Endothelial cell of umbilical vein (primary cell): ENCODE measurements at regions of chr11 and their contacts with region 1.

Region 1: DNA sequence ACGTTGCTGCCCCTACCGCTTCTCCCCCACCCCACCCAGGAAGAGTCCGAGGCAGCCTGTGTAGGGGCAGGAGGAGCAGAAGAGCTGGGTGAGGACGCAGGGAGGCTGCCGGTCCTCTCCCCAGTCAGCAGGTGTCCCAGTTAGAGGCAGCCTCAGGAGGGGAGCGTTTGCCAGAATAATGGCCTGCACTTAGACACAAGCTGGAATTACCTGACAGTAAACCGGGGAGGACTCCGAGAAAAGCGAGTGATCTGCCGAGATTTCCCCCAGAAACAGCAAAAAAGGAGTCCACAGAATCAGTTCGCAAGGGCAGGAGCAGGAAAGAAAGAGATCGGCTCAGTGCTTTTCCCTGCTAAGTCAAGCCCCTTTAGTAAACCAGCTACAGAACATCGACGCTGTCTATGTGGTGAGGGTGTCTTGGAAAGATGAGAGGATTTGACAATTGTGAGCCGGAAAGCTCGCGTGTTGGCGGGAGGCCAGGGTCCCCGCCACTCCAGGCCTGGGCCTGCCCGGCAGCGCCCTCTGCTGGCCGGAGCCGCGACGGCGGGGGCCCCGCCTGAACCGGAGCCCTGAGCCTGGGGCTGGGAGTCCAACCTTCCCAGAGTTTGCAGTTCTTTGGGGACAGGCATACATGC is 17.7 kb upstream of the THRSP start:
- DNase-seq: peak; percentile 62
- H3K4me3 ChIP-seq: peak overlapping the region in 2 of 3 experiments; percentile 23 to 72
- H3K27ac ChIP-seq: no peak overlapping the region
- H3K4me1 ChIP-seq: peaks cover 8% of the 10 kb centered on the region
- H3K27me3 ChIP-seq: no peaks in the 10 kb centered on the region
- CTCF ChIP-seq: peak; percentile 97 to 99
- POLR2A ChIP-seq: no peak

Region 2: DNA sequence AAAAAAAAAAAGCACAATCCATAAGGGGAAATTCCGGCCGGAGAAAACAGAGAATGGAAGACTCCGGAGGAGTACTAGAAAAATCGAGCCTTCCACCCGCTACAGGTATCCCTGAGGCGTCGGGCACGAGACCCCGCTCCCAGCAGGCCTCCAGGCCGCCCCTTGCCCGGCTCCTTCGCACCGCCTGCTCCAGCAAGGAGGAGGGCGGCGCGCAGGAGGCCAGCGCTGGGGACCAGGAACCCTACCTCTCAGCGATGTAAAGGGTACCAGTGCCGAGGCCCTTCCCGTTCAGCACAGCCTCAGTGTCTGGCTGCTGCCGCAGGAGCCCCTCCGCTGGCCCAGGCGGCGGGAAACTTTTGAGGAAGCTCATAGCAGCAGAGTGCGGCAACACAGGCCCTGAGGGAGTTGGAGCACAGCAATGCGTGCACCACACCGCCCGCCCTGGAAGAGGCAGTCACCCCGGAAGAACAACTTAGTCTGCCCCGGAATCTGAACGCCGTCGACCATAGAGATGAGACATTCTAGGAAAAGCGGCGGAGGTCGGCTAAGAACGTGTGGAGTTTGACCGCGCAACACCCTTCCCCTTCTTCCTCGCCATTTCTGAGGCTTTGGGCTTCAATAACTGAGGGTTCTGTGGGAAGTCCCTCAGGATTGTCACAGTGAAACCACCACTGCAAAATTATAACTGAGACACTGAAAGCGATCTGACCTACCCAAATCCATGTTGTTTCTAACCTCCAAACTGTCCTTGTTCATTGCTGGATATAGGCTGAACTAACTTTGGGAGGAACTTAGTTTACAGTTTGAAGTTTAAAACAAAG is 408.4 kb before region 1 on chr11 and contains the start of gene CLNS1A:
- CTCF ChIA-PET with region 1: no interaction called
- POLR2A ChIA-PET with region 1: no interaction called
- dilution Hi-C with region 1: no loop called
- intact Hi-C with region 1: loop called (anchors 2 kb)
- DNase-seq: peak; percentile 90
- H3K4me3 ChIP-seq: peak within 1 kb of the TSS; percentile 61 to 88 (median 86)
- H3K27ac ChIP-seq: peak within 1 kb of the TSS; percentile 49
- H3K4me1 ChIP-seq: peaks cover 7% of the 10 kb centered on the region
- H3K27me3 ChIP-seq: no peaks in the 10 kb centered on the region
- CTCF ChIP-seq: no peak
- POLR2A ChIP-seq: peak; percentile 90
- total RNA-seq, gene CLNS1A: 89.9 and 99.7 TPM in 2 replicates

Region 3: DNA sequence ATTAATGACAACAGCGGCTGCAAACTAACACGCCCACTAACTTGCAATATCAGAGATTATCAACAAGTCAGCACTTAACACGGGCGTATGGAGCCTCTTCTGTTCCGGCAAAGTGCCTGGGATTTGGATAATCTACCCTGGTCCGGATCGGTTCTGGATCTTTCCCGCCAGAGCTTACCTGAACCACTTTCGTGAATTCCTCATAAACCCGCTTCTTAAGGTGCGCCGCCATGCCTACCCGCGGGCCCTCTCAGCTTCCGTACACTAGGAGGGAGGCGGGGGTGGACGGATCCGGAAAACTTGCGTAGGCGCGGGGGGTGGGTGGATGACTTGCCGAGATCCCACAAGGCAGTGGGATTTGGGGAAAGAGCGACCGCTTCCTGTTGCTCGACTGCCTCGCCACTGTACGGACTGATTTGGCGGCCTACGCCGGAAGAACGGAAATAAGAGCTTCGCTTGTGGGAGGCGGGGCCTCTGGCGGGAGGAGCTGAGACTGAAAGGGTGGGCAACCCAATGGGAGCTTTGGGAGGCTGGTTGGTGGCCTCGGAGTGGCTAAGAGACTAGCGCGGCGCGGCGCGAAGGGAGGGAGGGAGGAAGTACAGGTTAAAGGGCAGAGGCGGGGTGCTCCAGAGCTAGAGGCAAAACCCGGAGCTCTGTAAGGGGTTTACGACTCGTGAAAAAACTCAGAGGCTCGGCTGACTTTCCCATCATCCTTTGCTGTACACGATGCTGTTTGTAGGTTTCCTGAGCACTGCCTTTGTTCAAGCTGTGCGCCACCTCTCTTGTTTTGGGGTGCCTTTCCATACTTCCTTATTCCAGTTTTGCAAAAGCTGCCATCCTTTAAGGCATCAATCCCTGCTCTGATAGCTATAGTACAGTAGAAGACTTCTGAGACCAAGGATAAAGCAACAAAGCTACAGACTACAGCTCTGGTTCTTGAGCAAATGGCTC is 51.3 kb before region 1 on chr11 and contains the start of gene INTS4:
- CTCF ChIA-PET with region 1: interaction called, 28 read pairs
- POLR2A ChIA-PET with region 1: interaction called, 4 read pairs
- dilution Hi-C with region 1: no loop called
- intact Hi-C with region 1: no loop called
- DNase-seq: peak; percentile 100
- H3K4me3 ChIP-seq: peak within 1 kb of the TSS; percentile 75 to 99 (median 95)
- H3K27ac ChIP-seq: peak within 1 kb of the TSS; percentile 47
- H3K4me1 ChIP-seq: peaks cover 15% of the 10 kb centered on the region
- H3K27me3 ChIP-seq: no peaks in the 10 kb centered on the region
- CTCF ChIP-seq: no peak
- POLR2A ChIP-seq: peak; percentile 77
- total RNA-seq, gene INTS4: 37.8 and 39.2 TPM in 2 replicates

Region 4: DNA sequence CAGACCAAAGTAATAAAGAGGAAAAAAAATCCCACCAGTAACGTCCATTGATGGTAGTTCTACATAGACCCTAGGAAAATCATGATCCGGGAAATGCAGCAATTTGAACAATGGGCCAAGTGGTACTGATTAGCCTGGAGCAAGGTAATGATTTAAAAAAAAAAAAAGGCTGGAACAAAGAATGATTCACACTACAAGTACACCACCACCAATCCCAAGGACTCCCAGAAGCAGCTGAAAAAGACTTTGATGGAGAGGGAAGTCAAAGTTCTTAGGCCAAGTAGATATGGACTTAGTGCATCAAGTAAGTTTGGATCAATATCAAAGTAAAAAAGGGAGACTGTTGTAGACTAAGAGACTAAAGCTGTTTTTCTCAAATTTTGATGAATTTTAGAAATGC is 34.7 kb before region 1 on chr11:
- CTCF ChIA-PET with region 1: interaction called, 37 read pairs
- POLR2A ChIA-PET with region 1: no interaction called
- dilution Hi-C with region 1: no loop called
- intact Hi-C with region 1: no loop called
- DNase-seq: no peak
- H3K4me3 ChIP-seq: no peak overlapping the region
- H3K27ac ChIP-seq: no peak overlapping the region
- H3K4me1 ChIP-seq: no peaks in the 10 kb centered on the region
- H3K27me3 ChIP-seq: no peaks in the 10 kb centered on the region
- CTCF ChIP-seq: no peak
- POLR2A ChIP-seq: no peak

Region 5: DNA sequence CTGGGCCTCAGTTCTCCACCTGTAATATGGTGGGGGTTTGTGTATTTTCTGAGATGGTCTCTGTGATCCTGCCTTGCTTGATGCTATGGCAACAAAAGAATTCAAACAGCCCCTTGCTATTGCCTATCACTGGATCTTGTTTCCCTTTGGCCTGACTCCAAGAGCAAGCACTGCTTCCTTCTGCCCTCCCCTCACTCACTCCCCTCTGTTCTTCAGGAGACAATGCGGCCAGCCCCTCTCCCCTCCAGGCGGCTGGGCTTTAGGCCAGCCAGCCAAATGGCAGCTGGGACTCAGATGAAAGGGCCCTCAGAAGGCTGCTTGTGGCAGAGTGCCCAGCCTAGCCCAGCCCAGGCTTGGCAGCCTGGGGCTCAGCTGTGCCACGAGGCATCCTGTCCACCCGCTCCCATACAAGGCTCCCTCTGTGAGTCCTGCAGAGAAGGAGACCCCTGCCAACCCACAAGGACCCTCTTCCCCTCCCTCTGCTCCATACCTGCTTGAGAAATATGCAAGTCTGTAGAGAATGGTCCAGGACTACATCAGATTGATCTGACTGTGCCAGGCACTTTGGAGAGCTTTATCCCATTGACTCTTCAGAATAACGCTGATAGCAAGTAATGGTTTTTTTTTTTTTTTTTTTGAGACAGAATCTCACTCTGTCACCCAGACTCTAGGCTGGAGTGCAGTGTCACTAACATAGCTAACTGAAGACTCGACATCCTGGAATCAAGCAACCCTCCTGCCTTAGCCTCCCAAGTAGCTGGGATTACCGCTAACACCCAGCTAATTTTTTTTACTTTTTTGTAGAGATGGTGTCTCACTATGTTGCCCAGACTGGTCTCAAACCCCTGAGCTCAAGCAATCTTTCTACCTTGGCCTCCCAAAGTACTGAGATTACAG is 15.3 kb before region 1 on chr11:
- CTCF ChIA-PET with region 1: interaction called, 34 read pairs
- POLR2A ChIA-PET with region 1: no interaction called
- dilution Hi-C with region 1: no loop called
- intact Hi-C with region 1: loop called (anchors 2 kb)
- DNase-seq: peak; percentile 96
- H3K4me3 ChIP-seq: no peak overlapping the region
- H3K27ac ChIP-seq: peak overlapping the region; percentile 40
- H3K4me1 ChIP-seq: peaks cover 13% of the 10 kb centered on the region
- H3K27me3 ChIP-seq: no peaks in the 10 kb centered on the region
- CTCF ChIP-seq: no peak
- POLR2A ChIP-seq: no peak